Posterior vena cava (tissue), 2 donors: ENCODE measurements at regions of chr3 and their contacts with region 1.

Region 1: GRCh38 chr3:129927072-129927471 is 33.6 kb upstream of the TMCC1 start:
- DNase-seq: no peak

Region 2: GRCh38 chr3:129633751-129634392 is 293.2 kb before region 1 on chr3:
- intact Hi-C with region 1: loop called (anchors 5 kb)
- DNase-seq: peak; percentile 29

Region 3: GRCh38 chr3:129893581-129894070 is 33.4 kb before region 1 on chr3 and contains the start of gene TMCC1:
- intact Hi-C with region 1: no loop called
- DNase-seq: peak; percentile 94
- total RNA-seq, gene TMCC1: 38.4 to 47.7 TPM

Region 4: GRCh38 chr3:130117933-130118332 is 190.9 kb after region 1 on chr3:
- intact Hi-C with region 1: no loop called
- DNase-seq: no peak